Activated T-helper 2 cell treated with anti-CD3 and anti-CD28 coated beads, Interferon-gamma antibody, Interleukin-2, Interleukin-4, amounts not matched to agents 10 μg/mL and 5 μg/mL and 100 μg/mL, durations not matched to agents 14 hours and 24 hours and 36 hours (primary cell): ENCODE measurements at regions of chr17 and their contacts with region 1.

Region 1: GRCh38 chr17:82863941-82864774 is 24.3 kb upstream of the ZNF750 start:
- DNase-seq: peak; percentile 89
- H3K4me3 Mint-ChIP-seq: peak overlapping the region; percentile 75
- H3K27ac Mint-ChIP-seq: peak overlapping the region; percentile 91
- H3K4me1 Mint-ChIP-seq: peaks cover 64% of the 10 kb centered on the region
- H3K27me3 Mint-ChIP-seq: no peaks in the 10 kb centered on the region

Region 2: DNA sequence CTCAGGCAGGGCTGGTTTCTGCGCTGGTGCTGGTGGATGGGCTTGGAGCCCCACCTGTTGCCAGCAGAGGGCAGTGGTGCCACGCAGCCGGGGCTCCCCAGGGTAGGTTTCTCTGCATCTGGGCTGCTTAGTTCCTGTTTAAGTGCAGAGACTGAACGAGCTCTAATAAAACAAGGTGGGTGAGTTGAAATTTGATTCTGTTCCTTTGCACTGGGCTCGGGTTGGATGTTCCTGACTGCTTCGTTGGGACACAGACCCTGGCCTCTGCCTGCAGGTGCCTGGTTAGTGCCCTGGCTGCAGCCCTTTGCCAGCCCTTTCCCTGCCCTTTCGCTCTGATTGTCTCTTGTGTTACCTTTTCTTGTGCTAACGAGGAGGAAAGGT is 82.3 kb before region 1 on chr17:
- intact Hi-C with region 1: loop called (anchors 10 kb)
- DNase-seq: peak; percentile 77
- H3K4me3 Mint-ChIP-seq: no peak overlapping the region
- H3K27ac Mint-ChIP-seq: no peak overlapping the region
- H3K4me1 Mint-ChIP-seq: peaks cover 10% of the 10 kb centered on the region
- H3K27me3 Mint-ChIP-seq: no peaks in the 10 kb centered on the region

Region 3: GRCh38 chr17:82876602-82877379 is 12.6 kb after region 1 on chr17:
- intact Hi-C with region 1: loop called (anchors 1 kb)
- DNase-seq: no peak
- H3K4me3 Mint-ChIP-seq: no peak overlapping the region
- H3K27ac Mint-ChIP-seq: peak overlapping the region; percentile 60
- H3K4me1 Mint-ChIP-seq: peaks cover 48% of the 10 kb centered on the region
- H3K27me3 Mint-ChIP-seq: no peaks in the 10 kb centered on the region

Region 4: GRCh38 chr17:82881900-82882714 is 17.9 kb after region 1 on chr17:
- intact Hi-C with region 1: loop called (anchors 1 kb)
- DNase-seq: no peak
- H3K4me3 Mint-ChIP-seq: peak overlapping the region; percentile 71
- H3K27ac Mint-ChIP-seq: peak overlapping the region; percentile 86
- H3K4me1 Mint-ChIP-seq: peaks cover 69% of the 10 kb centered on the region
- H3K27me3 Mint-ChIP-seq: no peaks in the 10 kb centered on the region